CD8-positive, alpha-beta T cell (primary cell): ENCODE measurements at regions of chr12 and their contacts with region 1.

Region 1: DNA sequence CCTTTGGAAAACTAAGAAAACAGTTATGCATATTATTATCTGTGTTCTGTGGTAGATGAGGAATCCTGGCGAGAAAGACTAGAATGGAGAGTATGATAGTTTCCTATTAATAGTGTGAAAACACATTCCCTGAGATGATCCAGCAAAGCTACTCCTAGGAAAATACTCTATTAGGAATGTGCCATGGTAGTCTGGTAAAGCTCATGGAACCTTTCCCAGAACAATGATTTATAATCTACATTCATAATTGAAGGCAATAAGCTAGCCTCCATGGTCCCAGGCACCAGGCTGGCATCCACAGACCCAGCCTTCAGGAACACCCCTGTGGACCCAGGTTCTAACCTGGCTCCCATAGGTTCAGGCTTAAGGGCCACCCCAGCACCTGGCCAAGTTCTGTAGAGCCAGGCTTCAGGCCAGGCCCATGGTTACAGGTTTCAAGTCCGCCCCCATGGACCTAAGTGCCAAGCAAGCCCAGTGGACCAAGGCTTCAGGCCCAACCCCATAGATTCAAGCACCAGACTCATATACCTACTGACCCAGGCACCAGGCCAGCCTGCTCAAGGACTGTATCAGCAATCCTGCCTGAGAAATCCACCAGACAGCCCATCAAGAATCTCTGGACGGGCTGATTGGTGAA is 72.2 kb downstream of the ITPR2 start:
- DNase-seq: no peak
- ATAC-seq: no peak
- H3K4me3 ChIP-seq: no peak overlapping the region
- H3K4me3 Mint-ChIP-seq: no peak overlapping the region
- H3K27ac ChIP-seq: no peak overlapping the region
- H3K27ac Mint-ChIP-seq: no peak overlapping the region
- H3K4me1 ChIP-seq: no peaks in the 10 kb centered on the region
- H3K4me1 Mint-ChIP-seq: no peaks in the 10 kb centered on the region
- H3K27me3 ChIP-seq: no peaks in the 10 kb centered on the region
- H3K27me3 Mint-ChIP-seq: no peaks in the 10 kb centered on the region
- CTCF ChIP-seq: no peak

Region 2: GRCh38 chr12:26800858-26801257 is 40.1 kb after region 1 on chr12:
- CTCF ChIA-PET with region 1: no interaction called
- POLR2A ChIA-PET with region 1: no interaction called
- intact Hi-C with region 1: loop called in 1 of 2 experiments (anchors 1 kb)
- DNase-seq: no peak
- ATAC-seq: no peak
- H3K4me3 ChIP-seq: no peak overlapping the region
- H3K4me3 Mint-ChIP-seq: no peak overlapping the region
- H3K27ac ChIP-seq: no peak overlapping the region
- H3K27ac Mint-ChIP-seq: no peak overlapping the region
- H3K4me1 ChIP-seq: peaks cover 3% of the 10 kb centered on the region
- H3K4me1 Mint-ChIP-seq: peaks cover 27% of the 10 kb centered on the region
- H3K27me3 ChIP-seq: no peaks in the 10 kb centered on the region
- H3K27me3 Mint-ChIP-seq: no peaks in the 10 kb centered on the region
- CTCF ChIP-seq: no peak